ENCODE measurements at regions of chr6 and their contacts with region 1.

Region 1: GRCh38 chr6:36851149-36851614 is 11.9 kb upstream of the CPNE5 start:
- DNase-seq: peak; percentile 40
- ATAC-seq: no peak
- H3K4me3 Mint-ChIP-seq: no peak overlapping the region
- H3K27ac Mint-ChIP-seq: no peak overlapping the region
- H3K4me1 Mint-ChIP-seq: peaks cover 7% of the 10 kb centered on the region
- H3K27me3 Mint-ChIP-seq: no peaks in the 10 kb centered on the region
- CTCF ChIP-seq: peak; percentile 94

Region 2: DNA sequence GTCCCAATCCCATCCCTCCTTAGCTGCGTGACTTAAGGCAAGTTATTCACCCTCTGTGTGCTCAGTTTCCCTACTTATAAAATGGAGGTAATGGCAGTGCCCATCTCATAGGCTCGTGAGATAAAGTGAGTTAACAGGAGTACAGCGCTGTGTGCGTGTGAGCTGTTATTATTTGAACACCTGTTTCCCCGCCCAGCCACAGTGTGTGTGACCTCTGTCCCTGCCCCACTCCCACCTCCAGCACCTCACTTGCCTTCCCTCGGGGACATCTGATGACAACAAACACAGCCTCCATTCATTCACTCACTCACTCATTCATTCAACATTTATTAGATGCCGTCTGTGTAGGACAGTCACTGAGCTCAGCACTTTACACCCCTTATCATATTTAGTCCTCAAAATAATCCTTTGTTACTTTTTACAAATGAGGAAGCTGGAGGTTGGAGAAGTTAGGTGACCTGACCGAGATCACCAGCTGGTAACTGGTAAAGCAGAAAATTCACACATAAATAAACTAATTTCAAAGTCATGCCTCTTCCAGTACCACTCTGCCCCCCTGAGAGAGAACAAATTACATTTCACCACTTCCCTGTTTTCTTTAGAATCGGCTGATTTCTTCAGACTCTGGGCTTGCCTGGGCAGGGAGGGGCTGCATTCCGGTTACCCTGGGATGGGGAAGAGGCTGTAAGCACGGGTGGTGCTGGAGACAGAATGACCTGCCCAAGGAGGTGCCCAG is 70.6 kb before region 1 on chr6:
- CTCF ChIA-PET with region 1: interaction called, 65 read pairs
- POLR2A ChIA-PET with region 1: no interaction called
- intact Hi-C with region 1: no loop called
- DNase-seq: no peak
- ATAC-seq: no peak
- H3K4me3 Mint-ChIP-seq: no peak overlapping the region
- H3K27ac Mint-ChIP-seq: no peak overlapping the region
- H3K4me1 Mint-ChIP-seq: peaks cover 2% of the 10 kb centered on the region
- H3K27me3 Mint-ChIP-seq: peaks cover 1% of the 10 kb centered on the region
- CTCF ChIP-seq: no peak

Region 3: DNA sequence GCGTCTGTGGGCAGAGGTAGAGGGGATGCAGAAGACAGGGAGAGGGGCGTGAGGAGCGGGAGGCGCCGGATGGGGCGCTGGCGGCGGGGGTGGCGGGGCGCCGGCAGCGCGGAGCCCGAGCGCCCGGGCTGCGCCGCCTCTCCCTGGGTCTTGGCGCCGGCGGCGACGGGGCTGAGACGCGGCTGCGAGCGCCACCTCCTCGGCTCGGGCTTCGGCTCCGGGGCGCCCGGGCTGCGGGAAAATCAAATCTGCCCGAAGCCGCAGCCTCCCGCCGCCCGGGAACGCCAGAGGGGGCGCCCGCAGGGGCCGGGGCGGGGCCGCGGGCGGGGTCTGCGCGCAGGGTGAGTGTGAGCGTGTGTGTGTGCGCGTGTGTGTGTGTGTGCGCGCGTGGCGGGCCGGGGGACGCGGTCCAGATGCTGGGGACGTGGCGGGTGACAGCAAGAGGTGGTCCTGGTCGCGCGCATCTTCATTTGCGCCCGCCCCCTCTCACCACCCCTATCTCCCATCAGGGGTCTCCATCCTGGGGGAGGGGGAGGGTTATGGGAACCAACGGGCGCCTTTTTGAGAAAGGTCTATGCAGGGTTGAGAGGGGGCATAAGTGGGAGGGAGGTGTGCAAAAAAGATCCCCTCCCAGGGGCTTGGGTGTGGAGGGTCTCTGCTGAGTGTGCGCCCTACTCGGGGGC is 11.3 kb before region 1 on chr6:
- CTCF ChIA-PET with region 1: interaction called, 20 read pairs
- POLR2A ChIA-PET with region 1: interaction called, 13 read pairs
- intact Hi-C with region 1: no loop called
- DNase-seq: peak; percentile 24
- ATAC-seq: peak; percentile 70
- H3K4me3 Mint-ChIP-seq: peak overlapping the region; percentile 65
- H3K27ac Mint-ChIP-seq: no peak overlapping the region
- H3K4me1 Mint-ChIP-seq: peaks cover 9% of the 10 kb centered on the region
- H3K27me3 Mint-ChIP-seq: peaks cover 29% of the 10 kb centered on the region
- CTCF ChIP-seq: no peak

Region 4: GRCh38 chr6:36865835-36866234 is 14.7 kb after region 1 on chr6:
- CTCF ChIA-PET with region 1: interaction called, 52 read pairs
- POLR2A ChIA-PET with region 1: interaction called, 12 read pairs
- intact Hi-C with region 1: no loop called
- DNase-seq: no peak
- ATAC-seq: no peak
- H3K4me3 Mint-ChIP-seq: no peak overlapping the region
- H3K27ac Mint-ChIP-seq: peak overlapping the region; percentile 44
- H3K4me1 Mint-ChIP-seq: peaks cover 52% of the 10 kb centered on the region
- H3K27me3 Mint-ChIP-seq: no peaks in the 10 kb centered on the region
- CTCF ChIP-seq: no peak

Region 5: DNA sequence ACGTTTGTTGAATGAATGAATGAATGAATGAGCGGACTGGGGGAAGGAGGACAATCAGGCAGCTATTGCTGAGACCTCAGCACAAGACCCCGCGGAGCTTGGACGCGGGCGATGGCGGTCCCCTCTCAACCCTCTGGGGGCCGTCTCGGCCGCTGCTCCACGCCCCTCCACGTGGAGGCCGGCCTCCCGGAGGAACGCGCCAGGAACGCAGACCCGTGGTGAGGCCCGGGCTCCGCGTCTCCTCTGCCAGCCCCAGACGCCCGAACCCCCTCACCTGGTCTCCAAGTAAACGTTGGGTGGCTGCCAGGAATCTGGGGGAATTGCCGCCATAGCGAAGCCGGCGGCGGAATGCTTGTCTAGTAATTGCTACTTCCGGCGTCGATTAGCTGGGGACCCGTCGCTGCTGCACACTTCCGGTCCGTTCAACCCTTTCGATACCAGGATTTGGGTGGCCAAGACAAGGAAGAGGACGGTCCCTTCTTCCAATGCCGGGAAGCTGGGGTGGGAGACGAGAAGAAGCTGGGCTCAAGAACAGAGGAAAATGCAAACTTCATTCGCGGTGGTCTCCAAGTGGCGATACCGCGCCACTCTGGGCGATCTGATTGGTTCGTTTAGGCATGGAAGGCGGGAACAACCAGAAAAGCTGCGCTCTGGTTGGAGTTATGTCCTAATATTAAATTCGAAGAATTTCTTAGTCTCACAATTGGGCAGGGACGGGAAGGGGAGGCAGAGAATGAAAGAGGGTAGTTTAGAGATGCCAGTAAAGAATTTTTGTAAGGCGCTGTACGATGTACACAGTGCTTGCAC is 23.5 kb after region 1 on chr6 and contains the start of gene PPIL1:
- CTCF ChIA-PET with region 1: interaction called, 52 read pairs
- POLR2A ChIA-PET with region 1: interaction called, 3 read pairs
- intact Hi-C with region 1: no loop called
- DNase-seq: peak; percentile 88
- ATAC-seq: peak; percentile 91
- H3K4me3 Mint-ChIP-seq: peak within 1 kb of the TSS; percentile 99
- H3K27ac Mint-ChIP-seq: peak within 1 kb of the TSS; percentile 100
- H3K4me1 Mint-ChIP-seq: peaks cover 42% of the 10 kb centered on the region
- H3K27me3 Mint-ChIP-seq: peaks cover 5% of the 10 kb centered on the region
- CTCF ChIP-seq: no peak
- total RNA-seq, gene PPIL1: 34.5 to 35.6 TPM